ENCODE measurements at regions of chrX and their contacts with region 1.

Region 1: GRCh38 chrX:109927663-109928273 is 75.1 kb upstream of the TMEM164 start:
- DNase-seq: no peak
- ATAC-seq: peak; percentile 90 to 94 (median 92)
- H3K4me3 ChIP-seq: no peak overlapping the region
- H3K27ac ChIP-seq: peak overlapping the region; percentile 89
- H3K4me1 ChIP-seq: peaks cover 12% of the 10 kb centered on the region
- H3K27me3 ChIP-seq: no peaks in the 10 kb centered on the region
- CTCF ChIP-seq: no peak

Region 2: GRCh38 chrX:109862433-109862832 is 65.3 kb before region 1 on chrX:
- intact Hi-C with region 1: no loop called
- DNase-seq: no peak
- ATAC-seq: no peak
- H3K4me3 ChIP-seq: no peak overlapping the region
- H3K27ac ChIP-seq: no peak overlapping the region
- H3K4me1 ChIP-seq: no peaks in the 10 kb centered on the region
- H3K27me3 ChIP-seq: peaks cover 0 to 2% (median 0%) of the 10 kb centered on the region in 3 donors
- CTCF ChIP-seq: no peak

Region 3: GRCh38 chrX:109990582-109991276 is 63.0 kb after region 1 on chrX:
- intact Hi-C with region 1: loop called in 1 of 2 experiments (anchors 5 kb)
- DNase-seq: no peak
- ATAC-seq: no peak
- H3K4me3 ChIP-seq: no peak overlapping the region
- H3K27ac ChIP-seq: no peak overlapping the region
- H3K4me1 ChIP-seq: no peaks in the 10 kb centered on the region
- H3K27me3 ChIP-seq: peaks cover 0 to 19% (median 0%) of the 10 kb centered on the region in 3 donors
- CTCF ChIP-seq: no peak

Region 4: GRCh38 chrX:110002300-110003166 is 74.8 kb after region 1 on chrX and contains the start of gene TMEM164:
- intact Hi-C with region 1: loop called in 1 of 2 experiments (anchors 10 kb)
- DNase-seq: peak; percentile 85 to 92
- ATAC-seq: peak; percentile 84 to 90 (median 86)
- H3K4me3 ChIP-seq: peak within 1 kb of the TSS; percentile 73
- H3K27ac ChIP-seq: peak within 1 kb of the TSS; percentile 86
- H3K4me1 ChIP-seq: peaks cover 19% of the 10 kb centered on the region
- H3K27me3 ChIP-seq: peaks cover 0 to 15% (median 0%) of the 10 kb centered on the region in 3 donors
- CTCF ChIP-seq: no peak
- total RNA-seq, gene TMEM164: 27.0 to 42.4 (median 38.4) TPM